Tibial artery (tissue), 4 donors: ENCODE measurements at regions of chr16 and their contacts with region 1.

Region 1: DNA sequence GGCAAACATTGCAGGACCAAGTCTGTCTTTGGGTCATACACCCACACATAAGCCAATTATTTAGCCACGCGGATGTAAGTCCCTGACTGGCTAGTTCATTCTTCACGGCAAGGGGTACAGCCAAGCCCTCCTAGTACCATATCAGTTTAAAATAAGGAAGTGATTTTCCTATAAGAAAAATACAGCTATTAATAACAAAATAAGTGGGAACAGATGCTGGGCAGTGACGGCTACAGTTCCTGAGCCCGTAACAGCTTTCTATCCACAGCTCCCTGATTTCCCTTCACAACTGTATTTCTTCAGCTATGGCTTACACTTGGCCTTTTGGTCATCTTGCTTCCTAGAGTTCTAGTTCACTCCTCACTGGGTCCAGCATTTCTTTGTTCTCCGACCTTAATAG is 542.4 kb upstream of the C16orf82 start:
- DNase-seq: no peak
- H3K4me3 ChIP-seq: no peak overlapping the region
- H3K27ac ChIP-seq: no peak overlapping the region
- H3K4me1 ChIP-seq: no peaks in the 10 kb centered on the region
- H3K27me3 ChIP-seq: no peaks in the 10 kb centered on the region
- CTCF ChIP-seq: no peak

Region 2: GRCh38 chr16:26091511-26091910 is 432.8 kb before region 1 on chr16:
- intact Hi-C with region 1: loop called (anchors 5 kb)
- DNase-seq: no peak
- H3K4me3 ChIP-seq: no peak overlapping the region
- H3K27ac ChIP-seq: no peak overlapping the region
- H3K4me1 ChIP-seq: no peaks in the 10 kb centered on the region
- H3K27me3 ChIP-seq: no peaks in the 10 kb centered on the region
- CTCF ChIP-seq: no peak